B cell (primary cell): ENCODE measurements at regions of chr17 and their contacts with region 1.

Region 1: DNA sequence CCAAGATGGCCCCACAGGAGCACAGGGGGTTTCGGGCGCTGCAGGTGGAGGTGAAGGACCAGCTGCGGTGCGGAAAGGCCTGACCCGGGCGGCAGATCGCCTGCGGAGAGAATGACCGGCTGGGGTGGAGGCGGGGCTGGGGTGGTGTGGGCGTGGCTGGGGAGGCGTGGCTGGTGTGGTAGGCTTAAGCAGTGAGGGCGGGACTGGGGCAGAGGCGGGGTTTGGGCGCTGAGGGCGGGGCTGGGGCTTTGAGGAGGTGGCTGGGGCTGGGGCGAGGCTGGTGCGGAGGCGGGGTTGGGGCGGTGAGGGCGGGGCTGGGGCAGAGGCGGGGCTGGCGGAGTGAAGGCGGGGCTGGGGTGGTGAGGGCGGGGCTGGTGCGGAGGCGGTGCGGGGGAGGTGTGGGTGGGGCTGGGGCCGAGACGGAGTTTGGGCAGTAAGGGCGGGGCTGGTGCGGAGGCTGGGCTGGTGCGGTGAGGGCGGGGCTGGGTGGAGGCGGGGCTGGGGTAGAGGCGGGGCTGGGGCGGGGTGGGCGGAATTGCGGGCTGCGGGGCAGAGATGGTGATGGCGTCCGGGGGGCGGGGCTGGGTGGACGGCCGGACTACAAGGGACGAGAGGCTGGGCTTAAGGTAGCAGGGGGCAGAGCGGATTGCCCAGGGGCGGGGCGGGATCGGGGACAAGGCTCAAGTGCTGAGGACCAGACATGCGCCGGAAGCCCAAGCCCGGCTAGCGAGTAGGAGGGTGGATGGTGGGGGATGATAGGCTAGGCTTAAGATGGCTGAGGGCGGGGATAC is 9.9 kb upstream of the GSDMA start:
- DNase-seq: peak; percentile 96
- ATAC-seq: peak; percentile 84
- H3K4me3 ChIP-seq: peak overlapping the region in 4 of 5 experiments; percentile 50 to 66 (median 61)
- H3K4me3 Mint-ChIP-seq: peak overlapping the region; percentile 87
- H3K27ac ChIP-seq: peak overlapping the region; percentile 62
- H3K27ac Mint-ChIP-seq: peak overlapping the region; percentile 81
- H3K4me1 ChIP-seq: peaks cover 24 to 38% of the 10 kb centered on the region in 2 donors
- H3K4me1 Mint-ChIP-seq: peaks cover 31% of the 10 kb centered on the region
- H3K27me3 ChIP-seq: no peaks in the 10 kb centered on the region
- H3K27me3 Mint-ChIP-seq: no peaks in the 10 kb centered on the region
- CTCF ChIP-seq: no peak

Region 2: GRCh38 chr17:39687811-39688518 is 264.9 kb before region 1 on chr17 and contains the start of gene PGAP3:
- CTCF ChIA-PET with region 1: no interaction called
- POLR2A ChIA-PET with region 1: no interaction called
- intact Hi-C with region 1: loop called (anchors 2 kb)
- DNase-seq: peak; percentile 94
- ATAC-seq: peak; percentile 94
- H3K4me3 ChIP-seq: peak within 1 kb of the TSS; percentile 65 to 92 (median 75)
- H3K4me3 Mint-ChIP-seq: peak within 1 kb of the TSS; percentile 99
- H3K27ac ChIP-seq: peak within 1 kb of the TSS; percentile 70 to 87
- H3K27ac Mint-ChIP-seq: peak within 1 kb of the TSS; percentile 98
- H3K4me1 ChIP-seq: peaks cover 15 to 18% of the 10 kb centered on the region in 2 donors
- H3K4me1 Mint-ChIP-seq: peaks cover 21% of the 10 kb centered on the region
- H3K27me3 ChIP-seq: no peaks in the 10 kb centered on the region
- H3K27me3 Mint-ChIP-seq: no peaks in the 10 kb centered on the region
- CTCF ChIP-seq: no peak
- total RNA-seq, gene PGAP3: 34.3 and 36.9 TPM in 2 replicates

Region 3: GRCh38 chr17:39872751-39873150 is 80.1 kb before region 1 on chr17:
- CTCF ChIA-PET with region 1: interaction called, 31 read pairs
- POLR2A ChIA-PET with region 1: no interaction called
- intact Hi-C with region 1: no loop called
- DNase-seq: peak; percentile 56
- ATAC-seq: peak; percentile 31
- H3K4me3 ChIP-seq: peak overlapping the region in 2 of 5 experiments; percentile 2 to 6
- H3K4me3 Mint-ChIP-seq: peak overlapping the region; percentile 67
- H3K27ac ChIP-seq: peak overlapping the region in 1 of 2 donors; percentile 36
- H3K27ac Mint-ChIP-seq: peak overlapping the region; percentile 50
- H3K4me1 ChIP-seq: peaks cover 31 to 45% of the 10 kb centered on the region in 2 donors
- H3K4me1 Mint-ChIP-seq: peaks cover 44% of the 10 kb centered on the region
- H3K27me3 ChIP-seq: no peaks in the 10 kb centered on the region
- H3K27me3 Mint-ChIP-seq: no peaks in the 10 kb centered on the region
- CTCF ChIP-seq: peak; percentile 82

Region 4: DNA sequence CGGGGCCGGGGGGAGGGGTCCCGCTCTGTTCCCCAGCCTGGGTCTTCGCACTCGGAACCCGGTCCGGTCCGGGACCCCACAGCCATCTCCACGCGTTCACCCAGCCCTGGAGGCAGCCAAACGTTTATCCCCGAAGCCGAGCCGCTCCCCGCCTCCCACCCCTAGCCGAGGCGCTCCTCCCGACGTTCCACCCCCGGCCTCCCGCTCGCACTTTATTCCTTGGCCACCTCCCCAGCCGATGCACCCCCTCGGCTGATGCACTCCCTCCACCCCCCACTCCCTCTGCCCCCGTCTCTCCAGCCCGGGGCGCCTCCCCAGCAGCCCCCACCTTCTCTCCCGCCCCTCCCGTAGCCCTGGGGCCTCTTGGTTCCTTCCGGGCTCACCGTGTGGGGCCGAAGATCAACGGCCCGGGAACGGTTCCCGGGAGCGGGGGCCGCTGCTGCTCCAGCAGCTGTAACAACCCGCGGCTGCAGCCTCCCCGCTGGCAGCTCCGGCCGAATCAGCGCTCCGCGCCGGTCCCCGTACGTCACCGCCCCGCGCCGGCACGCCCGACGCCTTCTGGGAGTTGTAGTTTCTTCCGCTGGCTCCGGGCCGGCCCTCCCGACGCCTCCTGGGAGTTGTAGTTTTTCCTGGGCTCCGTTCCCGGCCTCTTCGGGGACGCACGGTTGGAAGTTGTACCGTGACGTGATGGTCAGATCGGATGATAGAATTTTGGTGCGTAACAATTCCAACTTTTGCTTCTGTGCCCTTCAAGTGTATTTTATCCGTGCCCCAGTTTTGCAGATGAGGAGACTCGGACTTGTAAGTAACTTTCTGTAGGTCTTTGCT is 25.6 kb before region 1 on chr17 and contains the starts of genes LRRC3C and ORMDL3:
- CTCF ChIA-PET with region 1: interaction called, 7 read pairs
- POLR2A ChIA-PET with region 1: no interaction called
- intact Hi-C with region 1: loop called (anchors 1 kb)
- DNase-seq: peak; percentile 93
- ATAC-seq: peak; percentile 96
- H3K4me3 ChIP-seq: peak within 1 kb of the TSS; percentile 66 to 93 (median 79)
- H3K4me3 Mint-ChIP-seq: peak within 1 kb of the TSS; percentile 92
- H3K27ac ChIP-seq: peak within 1 kb of the TSS; percentile 46 to 73
- H3K27ac Mint-ChIP-seq: peak within 1 kb of the TSS; percentile 87
- H3K4me1 ChIP-seq: peaks cover 33 to 34% of the 10 kb centered on the region in 2 donors
- H3K4me1 Mint-ChIP-seq: peaks cover 36% of the 10 kb centered on the region
- H3K27me3 ChIP-seq: no peaks in the 10 kb centered on the region
- H3K27me3 Mint-ChIP-seq: no peaks in the 10 kb centered on the region
- CTCF ChIP-seq: no peak
- total RNA-seq, gene LRRC3C: not detected in 2 replicates
- total RNA-seq, gene ORMDL3: 43.4 and 51.8 TPM in 2 replicates

Region 5: DNA sequence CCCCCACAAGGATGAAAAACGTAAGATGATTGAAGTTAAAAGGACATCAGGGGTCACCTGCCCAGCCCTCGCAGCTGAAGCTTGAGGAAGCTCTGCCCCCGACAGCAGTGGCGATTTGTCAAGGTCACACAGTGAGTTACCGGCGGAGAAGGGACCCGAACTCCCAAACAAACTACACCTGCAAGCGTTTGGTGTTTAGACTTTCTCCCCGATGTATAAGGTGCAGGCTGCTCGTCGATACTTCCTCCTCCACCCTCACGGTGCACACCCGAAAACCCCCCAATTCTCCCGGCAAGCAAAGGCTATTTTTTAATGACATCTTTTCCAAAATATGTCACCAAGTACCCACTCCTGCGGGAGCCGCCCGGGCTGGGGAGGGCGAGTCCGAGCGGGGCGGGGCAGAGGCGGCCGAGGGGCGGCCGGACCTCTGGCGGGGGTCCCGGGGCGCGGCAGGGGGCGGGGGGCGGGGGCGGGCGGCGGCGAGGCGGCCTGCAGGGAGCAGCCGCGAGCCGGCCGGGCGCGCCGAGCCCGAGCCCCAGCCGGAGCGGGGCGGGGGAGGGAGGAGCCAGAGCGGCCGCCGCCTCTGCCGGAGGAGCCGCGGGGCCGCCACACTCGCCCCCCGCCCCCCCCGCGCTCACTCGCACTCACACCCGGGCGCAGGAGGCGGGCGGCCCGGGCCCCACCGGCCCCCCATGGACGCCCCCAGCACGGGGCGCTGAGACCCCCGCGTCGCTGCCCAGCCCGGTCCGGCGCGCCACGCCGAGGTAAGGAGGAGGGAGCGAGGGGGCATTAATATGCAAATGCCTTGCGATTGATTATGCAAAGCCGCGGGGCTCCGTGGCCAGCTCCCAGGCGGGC is 109.7 kb after region 1 on chr17 and contains the start of gene THRA:
- CTCF ChIA-PET with region 1: no interaction called
- POLR2A ChIA-PET with region 1: no interaction called
- intact Hi-C with region 1: loop called (anchors 10 kb)
- DNase-seq: peak; percentile 85
- ATAC-seq: peak; percentile 92
- H3K4me3 ChIP-seq: peak within 1 kb of the TSS; percentile 53 to 96 (median 95)
- H3K4me3 Mint-ChIP-seq: peak within 1 kb of the TSS; percentile 91
- H3K27ac ChIP-seq: peak within 1 kb of the TSS; percentile 59 to 67
- H3K27ac Mint-ChIP-seq: peak within 1 kb of the TSS; percentile 93
- H3K4me1 ChIP-seq: peaks cover 17 to 23% of the 10 kb centered on the region in 2 donors
- H3K4me1 Mint-ChIP-seq: peaks cover 39% of the 10 kb centered on the region
- H3K27me3 ChIP-seq: peaks cover 0 to 6% (median 1%) of the 10 kb centered on the region in 4 experiments
- H3K27me3 Mint-ChIP-seq: peaks cover 6% of the 10 kb centered on the region
- CTCF ChIP-seq: no peak
- total RNA-seq, gene THRA: 16.8 and 17.1 TPM in 2 replicates

Region 6: GRCh38 chr17:40098846-40099618 is 146.2 kb after region 1 on chr17:
- CTCF ChIA-PET with region 1: no interaction called
- POLR2A ChIA-PET with region 1: no interaction called
- intact Hi-C with region 1: loop called (anchors 1 kb)
- DNase-seq: peak; percentile 98
- ATAC-seq: peak; percentile 64
- H3K4me3 ChIP-seq: peak overlapping the region; percentile 51 to 91 (median 78)
- H3K4me3 Mint-ChIP-seq: peak overlapping the region; percentile 77
- H3K27ac ChIP-seq: peak overlapping the region; percentile 92 to 93
- H3K27ac Mint-ChIP-seq: peak overlapping the region; percentile 89
- H3K4me1 ChIP-seq: peaks cover 53 to 70% of the 10 kb centered on the region in 2 donors
- H3K4me1 Mint-ChIP-seq: peaks cover 74% of the 10 kb centered on the region
- H3K27me3 ChIP-seq: no peaks in the 10 kb centered on the region
- H3K27me3 Mint-ChIP-seq: no peaks in the 10 kb centered on the region
- CTCF ChIP-seq: no peak